Caco-2 (cell line): ENCODE measurements at regions of chr2 and their contacts with region 1.

Region 1: DNA sequence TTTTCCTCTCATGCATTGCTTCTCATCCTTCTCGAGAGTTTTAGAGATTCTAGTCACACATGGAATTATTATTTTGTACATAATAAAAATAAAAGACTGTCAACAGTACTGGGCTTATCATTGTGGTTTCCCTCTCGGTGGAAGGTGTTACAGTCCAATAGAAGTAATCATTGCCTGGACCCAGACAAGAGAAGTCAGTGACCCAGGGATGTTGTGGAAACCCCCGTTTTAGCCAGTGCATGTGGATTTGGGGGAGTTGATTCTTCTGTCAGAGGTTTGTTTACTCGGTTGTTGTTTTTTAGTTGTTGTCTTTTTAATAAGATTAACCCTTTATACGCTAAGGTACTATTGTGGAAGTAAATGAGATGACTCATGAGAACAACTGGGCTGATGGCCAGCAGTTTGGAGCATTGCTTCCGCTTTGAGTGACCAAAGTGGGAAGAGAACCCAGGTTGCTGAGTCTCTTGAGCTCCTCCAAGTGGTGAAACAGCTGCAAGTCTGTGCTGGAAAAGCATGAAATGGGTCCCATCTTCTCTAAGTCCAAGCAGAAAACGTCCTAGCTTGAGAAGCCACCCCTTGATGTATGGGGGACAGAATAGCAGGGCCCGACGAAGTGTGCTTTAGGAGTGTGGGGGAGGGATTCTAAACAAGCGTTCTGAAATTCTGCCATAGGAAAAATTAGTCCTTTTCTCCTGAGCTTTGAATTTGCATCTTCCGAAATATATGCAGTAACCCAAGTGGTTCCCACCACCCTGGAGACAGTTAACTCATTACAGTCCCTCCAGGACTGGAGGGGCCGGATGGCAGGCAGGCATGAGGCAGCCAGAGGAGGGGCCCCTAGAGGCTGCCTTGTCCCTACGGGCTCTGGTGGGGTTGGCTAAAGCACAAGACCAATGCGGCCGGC is 61.8 kb upstream of the GPR45 start:
- DNase-seq: peak in 1 of 2 experiments; percentile 31
- H3K4me3 ChIP-seq: no peak overlapping the region
- H3K4me3 Mint-ChIP-seq: no peak overlapping the region
- H3K27ac Mint-ChIP-seq: no peak overlapping the region
- H3K4me1 ChIP-seq: no peaks in the 10 kb centered on the region
- H3K4me1 Mint-ChIP-seq: peaks cover 7% of the 10 kb centered on the region
- H3K27me3 ChIP-seq: no peaks in the 10 kb centered on the region
- H3K27me3 Mint-ChIP-seq: peaks cover 12% of the 10 kb centered on the region
- CTCF ChIP-seq: peak; percentile 44 to 59

Region 2: GRCh38 chr2:105037572-105038382 is 141.9 kb before region 1 on chr2 and contains the start of gene MRPS9:
- CTCF ChIA-PET with region 1: no interaction called
- POLR2A ChIA-PET with region 1: no interaction called
- intact Hi-C with region 1: no loop called
- DNase-seq: peak; percentile 98 to 99
- H3K4me3 ChIP-seq: peak within 1 kb of the TSS; percentile 97
- H3K4me3 Mint-ChIP-seq: peak within 1 kb of the TSS; percentile 85
- H3K27ac Mint-ChIP-seq: peak within 1 kb of the TSS; percentile 72
- H3K4me1 ChIP-seq: no peaks in the 10 kb centered on the region; the same call in 1 of the 2 replicates
- H3K4me1 Mint-ChIP-seq: peaks cover 12% of the 10 kb centered on the region
- H3K27me3 ChIP-seq: no peaks in the 10 kb centered on the region
- H3K27me3 Mint-ChIP-seq: no peaks in the 10 kb centered on the region
- CTCF ChIP-seq: no peak
- total RNA-seq, gene MRPS9: 67.9 and 68.6 TPM in 2 replicates

Region 3: GRCh38 chr2:105121434-105121833 is 58.3 kb before region 1 on chr2:
- CTCF ChIA-PET with region 1: no interaction called
- POLR2A ChIA-PET with region 1: no interaction called
- intact Hi-C with region 1: no loop called
- DNase-seq: no peak
- H3K4me3 ChIP-seq: no peak overlapping the region
- H3K4me3 Mint-ChIP-seq: no peak overlapping the region
- H3K27ac Mint-ChIP-seq: no peak overlapping the region
- H3K4me1 ChIP-seq: no peaks in the 10 kb centered on the region
- H3K4me1 Mint-ChIP-seq: no peaks in the 10 kb centered on the region
- H3K27me3 ChIP-seq: no peaks in the 10 kb centered on the region; the same call in 1 of the 2 replicates
- H3K27me3 Mint-ChIP-seq: peaks cover 11% of the 10 kb centered on the region
- CTCF ChIP-seq: no peak

Region 4: DNA sequence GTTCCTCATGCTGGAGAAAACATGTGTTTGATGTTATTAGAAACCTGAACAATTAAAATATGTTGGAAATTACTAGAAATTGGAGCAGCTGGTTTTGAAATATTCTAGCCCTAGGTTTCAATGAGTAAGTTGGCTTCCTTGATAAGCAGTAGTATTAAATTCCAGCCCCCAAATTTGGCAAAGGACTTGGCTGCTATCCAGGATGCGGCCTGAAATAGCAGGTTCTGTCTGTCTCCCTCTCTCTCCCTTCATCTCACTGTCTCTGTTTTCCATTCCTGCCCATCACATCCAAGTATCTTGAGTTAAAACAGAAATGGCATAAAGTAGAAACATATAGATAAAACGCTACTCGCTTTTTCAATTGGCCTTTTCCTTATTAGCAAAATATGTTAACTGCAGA is 40.9 kb after region 1 on chr2:
- CTCF ChIA-PET with region 1: no interaction called
- POLR2A ChIA-PET with region 1: no interaction called
- intact Hi-C with region 1: no loop called
- DNase-seq: no peak
- H3K4me3 ChIP-seq: no peak overlapping the region
- H3K4me3 Mint-ChIP-seq: no peak overlapping the region
- H3K27ac Mint-ChIP-seq: no peak overlapping the region
- H3K4me1 ChIP-seq: no peaks in the 10 kb centered on the region
- H3K4me1 Mint-ChIP-seq: no peaks in the 10 kb centered on the region
- H3K27me3 ChIP-seq: no peaks in the 10 kb centered on the region; the same call in 1 of the 2 replicates
- H3K27me3 Mint-ChIP-seq: peaks cover 23% of the 10 kb centered on the region
- CTCF ChIP-seq: no peak

Region 5: DNA sequence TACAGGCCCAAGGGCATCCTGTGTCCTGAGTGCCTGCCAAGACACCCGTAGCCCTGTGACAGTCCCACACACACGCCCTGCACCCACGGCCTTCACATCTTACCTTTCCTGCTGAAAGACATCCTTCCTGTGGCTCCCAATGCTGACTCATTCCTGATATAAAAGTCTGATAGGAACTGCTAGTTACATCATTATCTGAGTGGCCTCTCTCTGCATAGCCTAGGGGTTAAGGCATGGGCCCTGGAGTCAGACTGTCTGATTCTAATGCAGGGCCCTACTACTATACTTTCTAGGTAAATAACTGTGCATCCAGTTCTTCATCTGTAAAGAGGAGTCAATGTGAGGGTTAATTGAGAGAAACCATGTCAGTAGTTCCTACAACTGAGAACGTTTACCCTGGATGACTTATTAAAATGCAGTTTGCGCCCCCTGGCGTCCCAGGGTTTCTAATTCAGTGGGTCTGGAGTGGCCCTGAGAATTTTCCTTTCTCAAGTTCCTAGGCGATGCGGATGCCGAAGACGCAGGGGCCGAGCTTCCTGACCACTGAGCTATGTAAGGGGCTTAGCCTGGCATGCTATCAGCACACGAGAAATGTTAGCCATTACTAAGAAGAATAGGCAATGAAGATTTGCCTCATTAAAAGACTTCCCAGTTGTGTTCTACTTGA is 55.8 kb after region 1 on chr2:
- CTCF ChIA-PET with region 1: no interaction called
- POLR2A ChIA-PET with region 1: no interaction called
- intact Hi-C with region 1: loop called (anchors 5 kb)
- DNase-seq: peak; percentile 80 to 82
- H3K4me3 ChIP-seq: no peak overlapping the region
- H3K4me3 Mint-ChIP-seq: no peak overlapping the region
- H3K27ac Mint-ChIP-seq: no peak overlapping the region
- H3K4me1 ChIP-seq: no peaks in the 10 kb centered on the region; the same call in 1 of the 2 replicates
- H3K4me1 Mint-ChIP-seq: no peaks in the 10 kb centered on the region
- H3K27me3 ChIP-seq: no peaks in the 10 kb centered on the region
- H3K27me3 Mint-ChIP-seq: no peaks in the 10 kb centered on the region
- CTCF ChIP-seq: peak; percentile 81 to 86